Activated CD4-positive, alpha-beta T cell treated with anti-CD3 and anti-CD28 coated beads for 36 hours (primary cell): ENCODE measurements at regions of chr3 and their contacts with region 1.

Region 1: GRCh38 chr3:128497387-128498126 is 4.6 kb upstream of the GATA2 start:
- DNase-seq: peak; percentile 85
- ATAC-seq: peak; percentile 78
- H3K4me3 Mint-ChIP-seq: peak overlapping the region; percentile 61
- H3K27ac Mint-ChIP-seq: no peak overlapping the region
- H3K4me1 Mint-ChIP-seq: no peaks in the 10 kb centered on the region
- H3K27me3 Mint-ChIP-seq: peaks cover 42% of the 10 kb centered on the region

Region 2: DNA sequence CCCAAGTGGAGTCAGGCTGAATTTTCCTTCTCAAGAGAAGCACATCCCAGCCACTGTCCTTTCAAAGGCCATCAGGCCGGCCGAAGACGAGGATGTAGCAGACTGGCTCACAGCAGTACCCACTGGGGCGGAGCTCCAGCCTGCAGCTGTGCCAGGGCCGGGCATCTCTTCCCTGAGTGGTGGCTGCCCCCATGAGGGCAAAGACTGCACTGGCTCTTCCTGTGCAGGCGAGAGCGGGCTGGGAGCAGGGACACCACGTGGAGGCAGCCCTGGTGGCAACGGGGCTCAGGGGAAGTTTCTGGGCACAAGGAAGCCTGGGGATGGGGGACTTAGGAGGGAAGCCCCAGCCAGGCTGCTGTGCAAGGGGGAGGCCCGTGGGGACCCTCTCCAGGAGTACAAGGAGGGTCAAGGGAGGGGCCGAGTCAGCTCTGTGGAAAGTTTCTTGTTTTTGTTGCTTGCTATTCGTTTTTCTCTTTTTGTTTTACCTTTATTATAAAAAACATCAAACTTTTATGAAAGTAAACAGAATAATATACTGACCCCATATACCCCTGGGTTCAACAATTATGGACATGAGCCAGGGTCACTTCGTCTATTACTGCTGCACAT is 87.0 kb after region 1 on chr3:
- CTCF ChIA-PET with region 1: interaction called, 5 read pairs
- POLR2A ChIA-PET with region 1: no interaction called
- intact Hi-C with region 1: loop called in 1 of 2 experiments (anchors 2 kb)
- DNase-seq: peak; percentile 81
- ATAC-seq: peak; percentile 99
- H3K4me3 Mint-ChIP-seq: no peak overlapping the region
- H3K27ac Mint-ChIP-seq: no peak overlapping the region
- H3K4me1 Mint-ChIP-seq: peaks cover 6% of the 10 kb centered on the region
- H3K27me3 Mint-ChIP-seq: peaks cover 11% of the 10 kb centered on the region

Region 3: DNA sequence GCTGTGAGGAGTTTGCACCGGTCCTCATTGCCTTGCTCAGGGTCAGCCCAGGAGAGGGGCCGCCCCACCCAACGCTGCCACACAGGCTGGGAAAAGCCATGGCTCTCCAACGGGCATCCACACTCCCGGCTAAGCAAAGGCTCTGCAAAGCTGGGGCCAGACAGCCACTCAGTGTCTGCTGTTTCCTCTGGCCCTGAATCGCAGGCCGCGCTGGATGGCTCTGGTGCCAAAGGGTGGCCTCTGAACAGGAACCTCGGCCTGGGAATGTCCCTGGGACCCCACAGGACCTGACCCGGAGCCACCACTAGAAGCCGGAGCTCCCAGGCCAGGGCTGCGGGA is 110.1 kb after region 1 on chr3:
- CTCF ChIA-PET with region 1: interaction called, 4 read pairs
- POLR2A ChIA-PET with region 1: no interaction called
- intact Hi-C with region 1: loop called (anchors 1 to 5 kb)
- DNase-seq: no peak
- ATAC-seq: no peak
- H3K4me3 Mint-ChIP-seq: no peak overlapping the region
- H3K27ac Mint-ChIP-seq: no peak overlapping the region
- H3K4me1 Mint-ChIP-seq: no peaks in the 10 kb centered on the region
- H3K27me3 Mint-ChIP-seq: no peaks in the 10 kb centered on the region